Gastrocnemius medialis (tissue), 4 donors: ENCODE measurements at regions of chr19 and their contacts with region 1.

Region 1: DNA sequence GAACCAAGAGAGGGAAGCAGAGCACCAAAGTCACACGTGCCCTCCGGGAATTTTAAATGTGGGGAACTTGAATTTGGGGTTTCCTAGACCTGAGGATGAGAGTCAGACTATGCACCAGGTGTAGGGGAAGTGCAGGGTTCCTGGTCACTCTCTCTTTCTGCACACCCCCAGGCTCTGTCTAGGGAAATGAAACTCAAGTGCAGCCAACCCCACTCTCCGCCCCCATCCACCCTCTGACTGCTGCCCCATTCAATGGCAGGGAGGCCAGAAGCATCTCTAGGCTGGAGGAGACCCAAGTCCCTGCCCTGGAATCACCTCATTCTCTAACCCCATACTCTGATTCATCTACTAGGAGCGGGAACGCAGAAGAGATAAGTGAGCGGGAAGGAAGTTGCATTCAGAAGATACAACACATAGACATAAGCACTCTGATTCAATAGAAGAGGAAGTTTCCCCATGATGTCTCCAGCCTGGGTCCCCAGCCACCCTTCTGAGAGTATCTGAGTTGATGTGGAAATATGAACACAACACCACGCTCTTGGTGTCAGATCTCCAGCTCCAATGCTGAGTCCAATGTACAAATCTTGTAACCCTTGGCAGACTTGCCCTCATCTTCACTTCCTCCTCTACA is 4.7 kb upstream of the SIGLEC14 start:
- DNase-seq: no peak
- ATAC-seq: peak in 1 of 2 donors; percentile 14
- H3K4me3 ChIP-seq: no peak overlapping the region
- H3K27ac ChIP-seq: no peak overlapping the region
- H3K4me1 ChIP-seq: no peaks in the 10 kb centered on the region
- H3K27me3 ChIP-seq: no peaks in the 10 kb centered on the region
- CTCF ChIP-seq: no peak
- POLR2A ChIP-seq: no peak

Region 2: GRCh38 chr19:51479531-51480331 is 171.6 kb before region 1 on chr19:
- in situ Hi-C with region 1: loop called in 3 of 4 experiments (anchors 5 to 25 kb)
- intact Hi-C with region 1: no loop called
- DNase-seq: no peak
- ATAC-seq: no peak
- H3K4me3 ChIP-seq: no peak overlapping the region
- H3K27ac ChIP-seq: no peak overlapping the region
- H3K4me1 ChIP-seq: no peaks in the 10 kb centered on the region
- H3K27me3 ChIP-seq: peaks cover 0 to 4% (median 0%) of the 10 kb centered on the region in 3 donors
- CTCF ChIP-seq: no peak
- POLR2A ChIP-seq: no peak